Ascending aorta (tissue), 2 donors: ENCODE measurements at regions of chr12 and their contacts with region 1.

Region 1: DNA sequence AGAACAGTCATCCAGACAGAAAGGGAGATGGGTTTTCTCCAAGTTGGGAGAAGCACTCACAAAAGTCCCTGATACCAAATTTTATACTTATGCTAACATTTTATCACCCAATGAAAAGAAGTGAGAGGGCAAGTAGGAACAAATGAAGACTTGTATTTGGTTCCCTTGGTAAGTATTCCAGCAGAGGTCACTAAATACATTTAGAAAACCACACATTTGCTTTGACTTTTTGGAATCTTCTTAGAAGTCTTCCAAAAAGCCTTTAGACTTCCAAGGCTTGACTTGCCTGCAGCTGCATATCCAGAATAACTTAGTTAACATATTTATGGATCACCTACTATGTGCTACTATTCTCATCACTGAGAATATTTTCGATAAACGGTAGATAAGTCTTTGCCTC is 3.1 kb upstream of the GYS2 start:
- DNase-seq: no peak
- H3K4me3 ChIP-seq: no peak overlapping the region
- H3K27ac ChIP-seq: no peak overlapping the region
- H3K4me1 ChIP-seq: no peaks in the 10 kb centered on the region
- H3K27me3 ChIP-seq: no peaks in the 10 kb centered on the region
- CTCF ChIP-seq: peak in 2 of 3 experiments; percentile 16 to 43

Region 2: GRCh38 chr12:21248679-21249078 is 359.0 kb before region 1 on chr12:
- intact Hi-C with region 1: no loop called
- DNase-seq: no peak
- H3K4me3 ChIP-seq: no peak overlapping the region
- H3K27ac ChIP-seq: no peak overlapping the region
- H3K4me1 ChIP-seq: no peaks in the 10 kb centered on the region
- H3K27me3 ChIP-seq: no peaks in the 10 kb centered on the region
- CTCF ChIP-seq: peak in 1 of 3 experiments; percentile 21

Region 3: DNA sequence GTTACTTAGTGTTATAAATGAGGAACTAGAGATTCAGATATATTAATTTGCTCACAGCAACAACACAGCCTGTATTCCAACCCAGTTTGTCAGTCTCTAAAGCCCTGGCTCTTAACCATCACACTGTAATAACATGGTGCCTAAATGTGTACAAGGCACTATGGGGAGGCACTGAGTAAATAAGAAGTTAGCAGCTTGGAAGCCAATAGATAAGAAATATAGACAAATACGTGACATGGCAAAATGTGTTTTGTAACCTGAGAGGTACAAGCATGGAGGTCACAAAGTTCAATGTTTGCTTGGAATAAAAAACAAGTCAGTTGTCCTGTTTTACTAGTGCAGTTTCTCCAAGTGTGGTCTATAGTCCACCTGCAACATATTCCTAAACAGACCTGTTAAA is 256.7 kb before region 1 on chr12:
- intact Hi-C with region 1: no loop called
- DNase-seq: no peak
- H3K4me3 ChIP-seq: no peak overlapping the region
- H3K27ac ChIP-seq: no peak overlapping the region
- H3K4me1 ChIP-seq: peaks cover 0 to 3% of the 10 kb centered on the region in 2 donors
- H3K27me3 ChIP-seq: no peaks in the 10 kb centered on the region
- CTCF ChIP-seq: no peak

Region 4: DNA sequence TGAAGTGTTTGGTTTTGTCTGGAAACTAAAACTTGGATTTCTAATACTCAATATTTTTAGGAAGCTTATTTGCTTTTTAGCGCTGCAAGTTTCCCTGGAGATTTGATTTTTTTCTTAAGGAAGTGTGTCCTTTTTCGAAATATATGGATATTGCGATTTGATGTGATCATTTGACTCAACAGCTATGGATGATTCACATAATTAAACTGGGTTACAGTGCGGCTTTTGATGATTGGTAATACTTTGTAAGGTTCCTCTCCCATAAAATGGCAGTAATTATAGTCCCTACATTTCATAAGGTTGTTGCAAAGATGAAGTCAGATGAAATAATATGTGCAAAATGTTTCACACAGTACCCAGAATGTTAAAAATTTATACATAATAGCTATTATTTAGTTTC is 36.8 kb after region 1 on chr12:
- intact Hi-C with region 1: no loop called
- DNase-seq: no peak
- H3K4me3 ChIP-seq: no peak overlapping the region
- H3K27ac ChIP-seq: no peak overlapping the region
- H3K4me1 ChIP-seq: no peaks in the 10 kb centered on the region
- H3K27me3 ChIP-seq: no peaks in the 10 kb centered on the region
- CTCF ChIP-seq: no peak

Region 5: GRCh38 chr12:21677622-21678277 is 70.0 kb after region 1 on chr12:
- intact Hi-C with region 1: loop called (anchors 2 kb)
- DNase-seq: no peak
- H3K4me3 ChIP-seq: no peak overlapping the region
- H3K27ac ChIP-seq: no peak overlapping the region
- H3K4me1 ChIP-seq: no peaks in the 10 kb centered on the region
- H3K27me3 ChIP-seq: no peaks in the 10 kb centered on the region
- CTCF ChIP-seq: no peak